Left colon (tissue), 2 donors: ENCODE measurements at regions of chr5 and their contacts with region 1.

Region 1: DNA sequence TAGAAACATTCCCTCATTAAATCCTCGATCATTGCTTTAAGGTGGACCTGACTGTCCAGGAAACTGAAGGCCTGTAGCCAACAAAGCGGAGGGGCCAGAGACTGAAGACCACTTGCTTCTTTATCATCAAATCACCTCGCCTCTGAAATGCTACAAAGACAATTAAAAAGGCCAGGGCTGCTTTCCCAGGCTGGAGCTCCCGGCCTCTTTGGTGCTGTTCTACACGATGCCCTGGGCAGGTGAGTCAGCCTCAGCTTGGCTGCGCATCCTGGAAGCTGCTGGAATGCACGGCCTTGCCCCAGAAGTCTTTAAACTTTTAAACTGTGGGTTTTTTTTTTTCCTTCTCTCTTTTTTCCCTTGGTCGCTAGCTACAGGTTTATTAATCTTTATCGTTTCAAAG is 46.5 kb downstream of the SH3PXD2B start:
- DNase-seq: no peak
- ATAC-seq: no peak

Region 2: DNA sequence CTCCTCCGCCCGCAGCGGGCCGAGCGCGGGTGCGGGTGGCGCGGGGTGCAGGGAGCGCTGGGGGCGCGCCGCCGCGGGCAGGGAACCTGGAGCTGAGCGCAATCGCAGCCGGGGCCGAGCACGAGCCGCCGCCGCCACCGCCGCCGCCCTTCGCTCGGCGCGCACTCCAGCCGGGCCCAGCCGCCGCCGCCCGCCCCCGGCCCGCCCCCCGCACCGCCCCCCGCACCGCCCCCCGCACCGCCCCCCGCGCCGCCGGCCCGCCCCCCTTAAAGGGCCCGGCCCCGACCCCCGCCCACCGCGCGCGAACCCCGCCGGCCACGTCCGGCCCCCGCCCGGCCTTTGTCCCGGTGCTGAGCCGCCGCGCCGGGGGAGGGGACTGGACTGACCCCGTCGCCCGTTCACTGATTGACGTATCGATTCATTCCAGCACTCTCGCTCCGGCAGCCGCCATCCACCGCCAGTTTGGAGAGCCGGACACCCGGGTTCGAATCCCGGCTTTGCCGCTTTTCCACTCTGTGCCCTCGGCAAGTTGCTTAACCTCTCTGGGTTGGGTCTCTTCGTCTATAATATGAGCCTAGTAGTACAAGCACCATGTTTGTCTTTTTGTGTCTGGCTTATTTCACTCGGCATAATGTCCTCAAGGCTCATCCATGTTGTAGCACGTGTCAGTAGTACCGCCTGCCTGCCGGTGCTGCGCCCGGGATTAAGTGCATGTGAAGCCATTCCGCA is 46.7 kb after region 1 on chr5 and contains the start of gene SH3PXD2B:
- intact Hi-C with region 1: loop called in 1 of 2 experiments (anchors 5 kb)
- DNase-seq: peak in 1 of 2 donors; percentile 67
- ATAC-seq: peak; percentile 69
- total RNA-seq, gene SH3PXD2B: 11.1 to 12.6 TPM